Endothelial cell of umbilical vein (primary cell): ENCODE measurements at regions of chr18 and their contacts with region 1.

Region 1: DNA sequence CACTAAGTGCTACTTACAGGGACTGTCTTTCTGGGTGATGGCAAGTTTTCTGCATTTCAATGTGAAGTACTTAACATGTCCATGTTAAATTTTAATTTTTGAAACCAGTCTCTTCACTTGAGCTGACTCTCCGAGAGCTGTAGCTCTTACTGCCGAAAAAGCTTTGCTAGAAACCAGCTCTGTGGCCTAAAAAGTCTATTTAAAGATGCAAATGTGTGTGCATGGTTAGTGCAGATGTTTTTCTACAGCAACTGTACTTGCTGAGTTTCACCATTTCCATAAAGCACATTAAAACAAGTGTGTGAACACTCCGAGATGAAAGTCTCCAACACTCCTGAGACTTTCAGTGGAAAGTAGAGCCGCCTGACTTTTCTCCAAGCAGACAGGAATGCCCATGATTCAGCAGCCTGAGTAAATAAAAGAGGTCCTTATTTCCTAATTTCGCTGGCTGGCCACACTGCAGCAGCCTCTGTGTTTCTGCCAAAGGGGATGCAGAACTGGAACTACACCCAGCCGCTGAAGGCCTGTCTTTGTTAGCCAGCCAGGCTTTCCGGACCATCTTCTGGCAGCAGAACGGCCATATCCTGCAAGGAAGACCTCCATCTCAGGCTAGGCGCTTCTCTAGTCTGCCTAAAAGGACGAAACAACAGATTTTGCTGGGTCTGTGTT is 121.2 kb downstream of the ZNF521 start:
- DNase-seq: peak; percentile 97
- H3K4me3 ChIP-seq: no peak overlapping the region
- H3K27ac ChIP-seq: peak overlapping the region; percentile 90
- H3K4me1 ChIP-seq: peaks cover 75% of the 10 kb centered on the region
- H3K27me3 ChIP-seq: no peaks in the 10 kb centered on the region
- CTCF ChIP-seq: no peak
- POLR2A ChIP-seq: no peak

Region 2: DNA sequence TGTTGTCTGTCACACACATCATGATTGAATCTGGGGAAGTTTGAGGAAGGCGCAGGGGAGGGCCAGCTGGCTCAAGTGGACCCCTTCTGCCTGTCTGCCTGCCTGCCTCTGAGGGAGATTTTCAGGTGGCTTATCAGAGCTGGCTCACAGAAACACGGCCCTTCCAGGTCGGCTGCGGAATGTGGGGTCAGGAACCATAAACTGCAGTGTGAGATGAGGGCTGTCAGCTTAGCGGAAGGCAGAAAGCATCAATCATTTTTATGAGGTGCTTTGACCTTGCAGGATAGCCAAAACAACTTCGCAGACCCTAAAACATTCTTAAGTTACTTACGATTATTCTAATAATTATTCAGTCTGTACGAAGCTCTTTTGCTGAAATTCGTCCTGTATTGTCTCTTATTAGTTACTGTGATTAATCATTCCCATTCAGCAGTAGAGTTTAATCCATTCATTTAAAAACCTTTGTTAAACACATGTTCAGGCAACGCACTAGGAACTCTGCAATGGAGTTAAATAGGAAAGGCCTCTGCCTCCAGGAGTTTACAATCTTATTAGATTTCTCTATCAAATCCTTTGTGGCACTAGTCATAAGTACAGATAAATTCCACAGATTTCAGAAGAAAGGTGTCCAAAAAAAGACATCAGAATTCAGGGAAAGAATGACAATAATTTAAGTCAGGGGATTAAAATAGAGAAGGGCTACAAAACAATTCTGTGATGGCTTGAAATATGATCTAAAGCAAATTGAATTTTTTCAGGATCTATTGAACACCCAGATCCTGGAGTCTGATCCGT is 398.7 kb before region 1 on chr18:
- CTCF ChIA-PET with region 1: interaction called, 5 read pairs
- POLR2A ChIA-PET with region 1: interaction called, 4 read pairs
- dilution Hi-C with region 1: no loop called
- intact Hi-C with region 1: loop called (anchors 1 kb)
- DNase-seq: peak; percentile 98
- H3K4me3 ChIP-seq: no peak overlapping the region
- H3K27ac ChIP-seq: peak overlapping the region; percentile 93
- H3K4me1 ChIP-seq: peaks cover 37% of the 10 kb centered on the region
- H3K27me3 ChIP-seq: peaks cover 0 to 2% of the 10 kb centered on the region in 2 experiments
- CTCF ChIP-seq: no peak
- POLR2A ChIP-seq: peak; percentile 96

Region 3: DNA sequence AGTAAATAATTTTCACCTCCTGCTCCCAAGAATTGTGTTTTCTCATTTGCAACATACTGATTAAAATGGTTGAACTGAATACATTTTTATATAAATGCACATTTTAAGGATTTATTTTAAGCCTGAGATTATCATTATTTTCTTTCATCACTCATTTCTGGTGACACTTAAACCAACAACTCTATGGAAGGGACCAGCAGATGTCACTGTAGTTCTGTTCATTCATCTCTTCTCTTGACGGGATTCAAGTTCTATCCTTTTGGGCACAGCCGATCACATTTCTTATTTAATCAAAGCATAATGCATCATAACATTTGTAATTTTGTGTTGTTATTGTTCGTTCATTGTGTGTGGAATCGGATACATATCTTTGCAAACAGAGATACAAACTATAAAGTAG is 352.5 kb before region 1 on chr18:
- CTCF ChIA-PET with region 1: no interaction called
- POLR2A ChIA-PET with region 1: interaction called, 8 read pairs
- dilution Hi-C with region 1: no loop called
- intact Hi-C with region 1: loop called (anchors 1 kb)
- DNase-seq: peak; percentile 75
- H3K4me3 ChIP-seq: no peak overlapping the region
- H3K27ac ChIP-seq: no peak overlapping the region
- H3K4me1 ChIP-seq: peaks cover 11% of the 10 kb centered on the region
- H3K27me3 ChIP-seq: no peaks in the 10 kb centered on the region
- CTCF ChIP-seq: peak; percentile 23 to 44
- POLR2A ChIP-seq: no peak

Region 4: GRCh38 chr18:25058521-25058920 is 172.3 kb before region 1 on chr18:
- CTCF ChIA-PET with region 1: no interaction called
- POLR2A ChIA-PET with region 1: interaction called, 4 read pairs
- dilution Hi-C with region 1: no loop called
- intact Hi-C with region 1: loop called (anchors 5 kb)
- DNase-seq: no peak
- H3K4me3 ChIP-seq: no peak overlapping the region
- H3K27ac ChIP-seq: no peak overlapping the region
- H3K4me1 ChIP-seq: peaks cover 17% of the 10 kb centered on the region
- H3K27me3 ChIP-seq: no peaks in the 10 kb centered on the region
- CTCF ChIP-seq: no peak
- POLR2A ChIP-seq: no peak

Region 5: GRCh38 chr18:25247725-25248124 is 16.9 kb after region 1 on chr18:
- CTCF ChIA-PET with region 1: interaction called, 7 read pairs
- POLR2A ChIA-PET with region 1: interaction called, 3 read pairs
- dilution Hi-C with region 1: no loop called
- intact Hi-C with region 1: loop called (anchors 1 kb)
- DNase-seq: peak; percentile 59
- H3K4me3 ChIP-seq: no peak overlapping the region
- H3K27ac ChIP-seq: peak overlapping the region; percentile 51
- H3K4me1 ChIP-seq: peaks cover 73% of the 10 kb centered on the region
- H3K27me3 ChIP-seq: no peaks in the 10 kb centered on the region
- CTCF ChIP-seq: no peak
- POLR2A ChIP-seq: no peak

Region 6: DNA sequence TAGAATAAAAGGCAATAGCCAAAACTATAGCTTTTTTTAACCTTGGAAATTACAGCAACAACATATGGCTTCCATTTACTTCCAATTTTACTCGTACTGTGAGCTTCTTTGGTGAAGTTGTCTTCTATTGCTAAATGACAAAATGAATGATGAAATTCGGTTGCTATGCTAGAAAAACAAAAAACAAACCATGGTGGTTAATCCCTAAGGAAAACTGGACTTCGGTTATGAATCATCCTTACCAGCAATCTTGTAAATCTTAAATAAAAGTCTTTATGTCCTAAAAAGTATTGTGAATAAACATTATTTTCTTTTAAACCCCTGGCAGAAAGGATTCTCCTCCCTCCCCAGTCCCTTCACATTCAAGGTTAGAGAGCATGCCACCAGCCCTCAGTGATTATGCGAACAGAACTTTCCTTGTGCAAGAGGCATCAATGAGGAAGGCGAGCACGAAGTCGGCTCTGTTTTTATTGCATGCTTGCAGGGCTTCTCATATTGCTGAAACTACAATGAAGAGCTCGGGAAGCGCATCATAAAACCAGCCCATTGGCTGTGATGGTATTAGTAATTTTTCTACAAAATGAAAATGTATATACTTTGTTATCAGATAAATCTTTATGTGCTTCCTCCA is 58.3 kb after region 1 on chr18:
- CTCF ChIA-PET with region 1: interaction called, 4 read pairs
- POLR2A ChIA-PET with region 1: no interaction called
- dilution Hi-C with region 1: no loop called
- intact Hi-C with region 1: loop called (anchors 2 kb)
- DNase-seq: peak; percentile 88
- H3K4me3 ChIP-seq: no peak overlapping the region
- H3K27ac ChIP-seq: peak overlapping the region; percentile 75
- H3K4me1 ChIP-seq: peaks cover 43% of the 10 kb centered on the region
- H3K27me3 ChIP-seq: no peaks in the 10 kb centered on the region
- CTCF ChIP-seq: no peak
- POLR2A ChIP-seq: no peak

Region 7: GRCh38 chr18:25517881-25518715 is 287.3 kb after region 1 on chr18:
- CTCF ChIA-PET with region 1: no interaction called
- POLR2A ChIA-PET with region 1: no interaction called
- dilution Hi-C with region 1: no loop called
- intact Hi-C with region 1: loop called (anchors 1 kb)
- DNase-seq: peak; percentile 99
- H3K4me3 ChIP-seq: no peak overlapping the region
- H3K27ac ChIP-seq: peak overlapping the region; percentile 91
- H3K4me1 ChIP-seq: peaks cover 37% of the 10 kb centered on the region
- H3K27me3 ChIP-seq: no peaks in the 10 kb centered on the region
- CTCF ChIP-seq: no peak
- POLR2A ChIP-seq: no peak